Dorsolateral prefrontal cortex (tissue), 120 donors: ENCODE measurements at regions of chr5 and their contacts with region 1.

Region 1: GRCh38 chr5:124906339-124907097 is 160.1 kb upstream of the ZNF608 start:
- DNase-seq: peak in 7 of 10 donors; percentile 34 to 76 (median 68)
- H3K4me3 ChIP-seq: peak overlapping the region in 33 of 59 donors; percentile 0 to 51 (median 23)
- H3K27ac ChIP-seq: peak overlapping the region; percentile 62 to 98 (median 92)
- H3K27me3 ChIP-seq: no peaks in the 10 kb centered on the region
- CTCF ChIP-seq: peak in 41 of 56 donors; percentile 6 to 49 (median 31)

Region 2: GRCh38 chr5:124773315-124774311 is 132.9 kb before region 1 on chr5:
- intact Hi-C with region 1: no loop called
- DNase-seq: no peak
- H3K4me3 ChIP-seq: peak overlapping the region in 20 of 59 donors; percentile 2 to 35 (median 16)
- H3K27ac ChIP-seq: peak overlapping the region in 15 of 59 donors; percentile 2 to 58 (median 33)
- H3K27me3 ChIP-seq: no peaks in the 10 kb centered on the region
- CTCF ChIP-seq: peak in 2 of 56 donors; percentile 12 to 23

Region 3: GRCh38 chr5:124920909-124921666 is 14.6 kb after region 1 on chr5:
- intact Hi-C with region 1: loop called in 1 of 2 experiments (anchors 2 kb)
- DNase-seq: no peak
- H3K4me3 ChIP-seq: peak overlapping the region in 7 of 59 donors; percentile 2 to 17 (median 8)
- H3K27ac ChIP-seq: peak overlapping the region in 58 of 59 donors; percentile 3 to 96 (median 88)
- H3K27me3 ChIP-seq: no peaks in the 10 kb centered on the region
- CTCF ChIP-seq: peak in 3 of 56 donors; percentile 13 to 21 (median 14)

Region 4: GRCh38 chr5:124980163-124980941 is 73.8 kb after region 1 on chr5:
- intact Hi-C with region 1: loop called in 1 of 2 experiments (anchors 5 kb)
- DNase-seq: peak in 5 of 10 donors; percentile 15 to 56 (median 18)
- H3K4me3 ChIP-seq: peak overlapping the region in 8 of 59 donors; percentile 0 to 22 (median 6)
- H3K27ac ChIP-seq: peak overlapping the region in 3 of 59 donors; percentile 6 to 29 (median 26)
- H3K27me3 ChIP-seq: no peaks in the 10 kb centered on the region
- CTCF ChIP-seq: peak in 9 of 56 donors; percentile 10 to 39 (median 20)